Head of caudate nucleus (tissue), 42 donors: ENCODE measurements at regions of chr4 and their contacts with region 1.

Region 1: GRCh38 chr4:122922877-122923511 is 597 bp upstream of the NUDT6 start:
- DNase-seq: peak; percentile 87 to 97 (median 94)

Region 2: DNA sequence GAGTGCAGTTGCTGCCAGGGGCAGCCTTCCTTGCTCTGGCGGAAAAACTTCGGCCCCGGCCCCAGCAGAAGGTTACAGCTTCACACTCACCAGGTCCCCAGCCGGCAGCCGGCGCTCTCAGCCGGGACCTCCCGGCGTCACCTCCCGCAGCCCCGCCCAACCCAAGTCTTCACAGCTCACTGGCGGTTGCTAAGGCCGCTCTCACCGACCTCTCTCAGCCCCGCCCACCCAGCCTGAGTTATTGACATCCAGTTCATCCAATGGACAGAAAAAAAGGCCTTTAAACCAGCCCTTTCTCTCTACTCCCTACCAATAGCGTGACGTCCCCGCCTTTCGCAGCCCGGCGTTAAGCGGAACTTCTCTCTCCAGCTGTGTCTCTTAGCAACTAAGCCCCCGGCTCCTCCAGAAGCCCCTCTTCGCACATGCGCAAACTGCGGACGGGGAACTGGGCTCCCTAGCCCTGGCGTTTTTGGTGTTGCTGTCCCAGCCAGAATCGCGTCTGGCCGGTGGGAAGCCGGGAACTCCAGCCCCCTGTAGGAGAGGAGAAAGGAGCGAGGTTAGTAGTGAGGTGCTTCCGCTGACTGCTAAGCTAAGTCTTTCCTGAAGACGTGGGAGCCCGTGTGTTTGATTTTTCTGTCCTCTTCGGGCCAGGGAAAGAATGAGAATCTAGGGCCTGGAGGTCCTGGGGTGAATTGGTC is 190.5 kb before region 1 on chr4 and contains the start of gene BBS12:
- intact Hi-C with region 1: loop called (anchors 5 kb)
- DNase-seq: peak; percentile 95 to 100 (median 99)

Region 3: DNA sequence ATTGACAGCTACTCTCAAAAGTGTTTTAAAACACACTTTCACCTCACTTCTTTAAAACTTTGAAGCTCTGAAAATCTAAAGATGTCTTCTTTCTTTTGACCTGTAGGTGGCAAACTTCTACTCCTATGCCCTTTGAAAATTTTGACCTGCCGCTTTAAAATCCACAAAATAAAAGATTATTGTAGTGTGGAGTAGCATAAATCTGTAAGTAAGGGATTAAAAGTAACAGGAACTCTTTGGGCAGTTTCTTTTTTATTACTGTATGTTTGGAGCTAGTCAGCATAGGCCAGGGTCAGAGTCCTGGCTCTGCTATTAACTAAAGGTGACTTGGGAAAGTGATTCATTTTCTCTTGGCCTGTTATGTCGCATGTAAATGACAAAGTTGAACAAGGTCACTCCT is 165.0 kb before region 1 on chr4:
- intact Hi-C with region 1: loop called (anchors 5 kb)
- DNase-seq: no peak

Region 4: DNA sequence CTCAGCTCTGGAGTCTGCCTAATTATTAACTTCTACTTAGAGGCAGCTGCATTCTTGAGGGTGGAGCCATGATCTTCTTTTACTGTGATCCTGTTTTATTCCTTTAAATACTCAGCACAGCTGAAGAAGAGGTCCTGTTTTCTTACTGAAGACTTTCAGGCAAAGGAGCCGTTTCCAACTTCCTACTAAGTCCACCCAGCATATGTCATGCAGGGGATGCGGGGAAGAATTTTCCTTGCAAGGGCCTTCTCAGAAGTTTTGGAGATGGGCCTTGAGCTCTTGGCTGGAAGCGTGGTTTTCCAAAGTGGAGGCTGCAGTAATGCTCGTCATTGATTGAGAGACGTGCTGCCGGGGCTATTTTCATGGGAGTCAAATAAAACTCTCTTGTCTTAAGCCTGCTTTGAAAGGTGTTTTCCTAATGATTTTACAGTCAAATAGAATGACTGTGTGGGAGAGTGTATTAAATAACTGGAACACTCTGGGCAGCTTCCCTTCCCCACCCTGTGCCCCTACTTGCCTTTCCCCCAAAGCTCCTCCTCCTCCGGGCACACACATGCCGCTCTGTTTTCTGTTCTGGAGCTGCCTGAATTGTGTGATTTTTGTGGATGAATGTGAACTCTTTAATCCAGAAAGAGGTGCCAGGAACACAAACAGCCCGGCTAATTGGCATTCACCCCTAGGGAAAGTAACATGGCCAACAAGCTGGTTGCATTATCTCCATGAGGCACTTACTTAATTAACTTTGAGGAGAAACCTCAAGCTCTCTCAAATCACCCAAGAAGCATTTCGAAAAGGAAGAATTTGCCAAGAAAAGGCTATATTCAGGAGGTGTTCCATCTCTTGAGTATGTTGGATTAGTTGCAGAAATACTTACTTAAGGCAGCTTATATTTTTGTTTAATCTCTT is 68.3 kb before region 1 on chr4:
- intact Hi-C with region 1: loop called (anchors 10 kb)
- DNase-seq: peak; percentile 40 to 87 (median 72)

Region 5: GRCh38 chr4:122963216-122963615 is 40.2 kb after region 1 on chr4:
- intact Hi-C with region 1: no loop called
- DNase-seq: no peak